ENCODE measurements at regions of chrX and their contacts with region 1.

Region 1: DNA sequence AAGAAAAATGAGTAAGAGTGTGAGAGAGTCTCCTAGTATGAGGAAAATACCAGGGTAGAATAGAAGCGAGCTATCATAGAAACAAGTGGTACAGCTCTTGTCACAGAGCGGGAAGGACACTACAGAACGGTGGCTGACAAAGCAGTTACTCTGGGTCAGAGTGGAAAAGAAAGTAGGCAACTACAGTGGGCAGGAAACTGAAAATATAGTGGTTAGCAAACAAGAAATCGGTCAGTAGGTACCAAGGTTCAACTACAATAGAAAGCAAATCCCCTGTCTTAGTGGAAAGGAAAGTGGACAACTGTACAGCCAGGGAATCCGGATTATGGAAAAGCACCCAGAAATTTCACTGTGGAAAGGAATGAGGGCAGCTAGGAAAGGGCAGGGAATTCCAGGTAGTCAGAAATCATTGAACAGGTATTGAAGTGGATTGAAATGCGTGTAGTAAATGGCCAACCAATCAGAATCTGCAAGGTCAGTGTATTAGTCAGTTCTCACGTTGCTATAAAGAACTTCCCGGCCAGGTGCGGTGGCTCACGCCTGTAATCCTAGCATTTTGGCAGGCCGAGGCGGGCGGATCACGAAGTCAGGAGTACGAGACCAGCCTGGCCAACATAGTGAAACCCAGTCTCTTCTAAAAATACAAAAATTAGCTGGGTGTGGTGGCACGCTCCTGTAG is 219.6 kb upstream of the DIAPH2 start:
- DNase-seq: no peak
- ATAC-seq: no peak
- H3K4me3 ChIP-seq: no peak overlapping the region
- H3K27ac ChIP-seq: no peak overlapping the region
- H3K4me1 ChIP-seq: no peaks in the 10 kb centered on the region
- H3K27me3 ChIP-seq: peaks cover 0 to 15% (median 0%) of the 10 kb centered on the region in 7 donors
- CTCF ChIP-seq: no peak

Region 2: GRCh38 chrX:96407057-96407456 is 58.0 kb before region 1 on chrX:
- intact Hi-C with region 1: loop called in 1 of 10 experiments (anchors 10 kb)
- DNase-seq: peak in 1 of 2 donors; percentile 8
- ATAC-seq: no peak
- H3K4me3 ChIP-seq: no peak overlapping the region
- H3K27ac ChIP-seq: no peak overlapping the region
- H3K4me1 ChIP-seq: peaks cover 0 to 6% (median 0%) of the 10 kb centered on the region in 9 donors
- H3K27me3 ChIP-seq: peaks cover 0 to 18% (median 0%) of the 10 kb centered on the region in 7 donors
- CTCF ChIP-seq: no peak

Region 3: DNA sequence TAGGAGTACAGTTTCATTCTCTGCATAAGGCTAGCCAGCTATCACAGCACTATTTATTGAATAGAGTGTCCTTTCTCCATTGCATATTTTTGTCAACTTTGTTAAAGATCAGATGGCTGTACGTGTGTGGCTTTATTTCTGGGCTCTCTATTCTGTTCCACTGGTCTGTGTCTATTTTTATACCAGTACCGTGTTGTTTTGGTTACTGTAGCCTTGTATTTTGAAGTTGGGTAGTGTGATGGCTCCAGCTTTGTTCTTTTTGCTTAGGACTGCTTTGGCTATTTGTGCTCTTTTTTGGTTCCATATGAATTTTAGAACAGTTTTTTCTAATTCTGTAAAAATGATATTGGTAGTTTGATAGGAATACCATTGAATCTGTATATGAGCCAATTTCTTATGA is 37.5 kb after region 1 on chrX:
- intact Hi-C with region 1: no loop called
- DNase-seq: no peak
- ATAC-seq: peak in 1 of 8 donors; percentile 58
- H3K4me3 ChIP-seq: no peak overlapping the region
- H3K27ac ChIP-seq: no peak overlapping the region
- H3K4me1 ChIP-seq: no peaks in the 10 kb centered on the region
- H3K27me3 ChIP-seq: no peaks in the 10 kb centered on the region
- CTCF ChIP-seq: no peak

Region 4: DNA sequence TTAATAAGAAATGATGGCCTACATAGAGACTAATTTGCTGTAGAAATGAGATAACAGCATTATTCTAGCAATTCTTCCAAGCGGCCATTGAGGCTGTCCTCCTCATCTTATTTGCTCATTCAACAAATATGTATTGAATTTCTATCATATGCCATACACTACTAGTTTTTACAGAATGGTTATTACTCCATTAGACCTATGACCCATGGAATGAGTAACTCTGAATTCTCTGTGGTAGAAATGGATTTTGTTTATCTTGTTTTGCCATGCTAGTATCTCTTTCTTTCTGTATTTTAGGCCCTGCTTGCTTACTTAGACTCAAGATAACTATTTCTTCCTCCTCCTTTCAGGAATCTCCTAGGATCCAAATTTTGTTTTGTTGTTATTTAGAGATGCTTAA is 522.2 kb after region 1 on chrX:
- intact Hi-C with region 1: no loop called
- DNase-seq: no peak
- ATAC-seq: no peak
- H3K4me3 ChIP-seq: no peak overlapping the region
- H3K27ac ChIP-seq: no peak overlapping the region
- H3K4me1 ChIP-seq: peaks cover 0 to 11% (median 0%) of the 10 kb centered on the region in 9 donors
- H3K27me3 ChIP-seq: peaks cover 0 to 21% (median 0%) of the 10 kb centered on the region in 7 donors
- CTCF ChIP-seq: no peak

Region 5: DNA sequence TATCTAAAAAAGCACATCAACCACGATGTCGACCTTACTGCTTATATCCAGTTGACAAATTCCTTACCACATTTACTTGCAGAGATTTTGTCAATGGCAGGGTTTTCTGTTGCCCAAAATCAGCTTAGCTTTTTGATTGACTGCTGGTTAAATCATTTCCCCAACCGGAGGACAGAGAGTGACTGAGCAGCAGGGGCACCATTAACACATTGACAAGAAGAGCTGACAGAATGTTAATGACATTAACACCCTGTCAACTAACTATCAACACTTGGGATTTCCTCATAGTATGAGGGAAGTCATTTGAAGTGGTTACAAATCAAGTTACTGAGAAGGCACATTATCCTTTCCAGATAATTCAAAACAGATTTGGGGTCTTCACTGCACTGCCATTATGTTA is 787.1 kb after region 1 on chrX:
- intact Hi-C with region 1: no loop called
- DNase-seq: no peak
- ATAC-seq: no peak
- H3K4me3 ChIP-seq: no peak overlapping the region
- H3K27ac ChIP-seq: no peak overlapping the region
- H3K4me1 ChIP-seq: no peaks in the 10 kb centered on the region
- H3K27me3 ChIP-seq: peaks cover 0 to 2% (median 0%) of the 10 kb centered on the region in 7 donors
- CTCF ChIP-seq: no peak

Measured in heart right ventricle (tissue), 16 donors.